ENCODE measurements at regions of chr22 and their contacts with region 1.

Region 1: GRCh38 chr22:29772170-29772641 is 5.0 kb downstream of the UQCR10 start:
- DNase-seq: no peak
- ATAC-seq: peak; percentile 27 to 50

Region 2: DNA sequence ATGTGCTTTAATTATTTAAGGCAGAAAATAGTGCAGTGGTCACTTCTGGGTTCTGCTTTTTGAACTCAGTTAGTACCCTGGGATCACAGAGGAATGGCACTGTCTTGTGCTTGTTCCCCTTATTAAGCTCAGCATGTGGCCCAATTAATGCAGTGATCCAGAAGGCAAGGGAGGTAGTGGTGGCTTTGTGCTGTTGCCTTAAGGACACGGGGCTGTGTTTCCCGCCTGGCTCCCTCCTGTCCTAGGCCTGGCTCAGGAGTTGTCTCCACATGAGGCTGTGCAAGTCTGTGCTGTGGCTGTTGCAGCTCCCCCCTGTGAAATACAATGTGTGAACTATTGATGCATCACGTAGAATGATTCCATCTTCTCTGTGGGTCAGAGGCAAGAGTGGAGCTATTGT is 101.6 kb before region 1 on chr22:
- intact Hi-C with region 1: no loop called
- DNase-seq: no peak
- ATAC-seq: no peak

Region 3: GRCh38 chr22:29716814-29717545 is 55.2 kb before region 1 on chr22:
- intact Hi-C with region 1: loop called in 1 of 2 experiments (anchors 10 kb)
- DNase-seq: peak; percentile 63
- ATAC-seq: peak; percentile 73 to 86

Region 4: GRCh38 chr22:29837780-29838598 is 65.8 kb after region 1 on chr22 and contains the start of gene ASCC2:
- intact Hi-C with region 1: loop called in 1 of 2 experiments (anchors 10 kb)
- DNase-seq: peak; percentile 100
- ATAC-seq: peak; percentile 98 to 99
- total RNA-seq, gene ASCC2: 34.6 to 52.6 TPM

Measured in left cardiac atrium (tissue), 4 donors.